Cardiac septum (tissue), 1 donor: ENCODE measurements at regions of chr18 and their contacts with region 1.

Region 1: DNA sequence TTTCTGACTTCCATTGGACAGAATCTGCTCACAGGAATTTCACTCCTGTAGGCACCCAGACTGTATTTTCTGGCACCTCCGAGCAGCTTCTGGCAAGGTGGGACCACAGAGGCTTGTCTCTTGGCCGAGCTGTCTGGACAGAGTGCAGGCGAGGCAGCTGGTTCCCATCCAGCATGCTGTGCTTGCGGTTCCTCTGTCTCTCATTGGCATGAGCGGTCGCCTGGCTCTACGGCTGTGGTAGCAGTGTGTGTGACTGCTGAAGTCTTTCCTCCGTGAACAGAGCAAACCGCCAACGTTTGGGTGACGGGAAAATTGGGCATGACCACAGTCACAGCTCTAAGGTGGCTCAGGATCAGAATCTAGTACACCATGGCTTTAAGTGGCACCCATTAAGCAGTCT is 411.7 kb upstream of the NETO1 start:
- DNase-seq: peak; percentile 87

Region 2: DNA sequence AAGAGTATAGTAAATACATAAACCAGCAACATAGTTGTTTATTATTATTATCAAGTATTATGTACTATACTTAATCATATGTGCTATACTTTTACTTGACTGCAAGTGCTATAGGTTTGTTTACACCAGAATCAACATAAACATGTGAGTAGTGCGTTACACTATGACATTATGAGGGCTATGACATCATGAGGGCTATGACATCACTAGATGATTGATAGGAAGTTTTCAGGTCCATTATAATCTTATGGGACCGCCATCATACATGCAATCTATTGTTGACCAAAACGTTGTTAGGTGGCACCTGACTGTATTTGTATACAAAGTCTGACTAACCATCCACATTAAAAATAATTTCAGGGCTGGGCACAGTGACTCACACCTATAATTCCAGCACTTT is 244.2 kb before region 1 on chr18:
- intact Hi-C with region 1: no loop called
- DNase-seq: no peak

Region 3: DNA sequence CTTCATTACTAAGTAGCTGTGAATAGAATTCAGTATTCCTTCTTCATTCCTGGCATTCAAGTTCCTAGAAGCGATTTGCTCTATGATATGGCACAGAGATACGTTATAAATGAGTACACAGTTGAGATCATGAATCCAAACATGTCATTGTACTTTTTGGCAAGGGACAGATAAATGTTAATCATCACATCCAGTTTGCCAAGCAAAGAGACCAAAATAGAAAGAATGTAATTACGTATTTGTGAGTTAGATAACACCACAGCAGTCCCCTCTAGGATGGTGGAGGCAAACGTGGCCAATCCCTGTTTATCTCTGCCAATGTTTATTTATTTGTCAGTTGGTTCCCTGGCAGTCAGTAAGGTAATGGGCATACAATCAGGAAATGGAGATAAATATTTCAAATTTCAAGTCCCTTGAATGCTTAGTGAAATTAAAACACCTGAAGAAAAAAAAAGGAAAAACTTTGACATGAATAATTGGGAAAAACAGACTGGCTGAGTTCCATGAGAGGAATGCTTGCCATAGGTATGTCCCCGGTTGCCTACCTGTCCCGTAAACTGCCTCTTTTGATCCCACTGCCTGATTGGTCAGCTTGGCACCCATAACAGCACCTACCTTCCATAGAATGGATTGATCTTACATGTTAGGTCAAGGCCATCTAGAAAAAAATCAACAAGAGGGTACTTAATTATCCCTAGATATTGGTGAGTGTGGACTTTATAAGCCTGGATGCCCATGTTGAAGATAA is 39.4 kb after region 1 on chr18:
- intact Hi-C with region 1: loop called (anchors 2 kb)
- DNase-seq: no peak

Region 4: DNA sequence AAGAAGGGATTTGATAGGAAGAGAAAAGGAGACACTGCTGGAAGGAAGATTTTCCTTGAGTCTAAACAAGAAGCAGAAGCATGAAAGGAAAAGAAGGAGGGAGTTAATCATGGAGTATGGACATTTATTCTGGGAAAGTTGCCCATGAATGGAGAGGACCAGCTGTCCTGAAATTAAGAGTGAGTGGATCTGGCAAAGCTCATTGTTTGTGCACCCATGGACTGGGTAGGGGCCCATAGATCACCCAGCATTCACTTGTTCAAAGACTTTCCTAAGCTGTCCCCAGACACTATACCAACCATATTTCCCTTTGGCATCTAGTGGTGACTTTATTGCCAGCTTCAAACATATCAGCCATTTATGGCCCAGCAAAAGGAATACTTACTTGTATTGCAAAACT is 445.5 kb after region 1 on chr18:
- intact Hi-C with region 1: no loop called
- DNase-seq: no peak